ENCODE measurements at regions of chr21 and their contacts with region 1.

Region 1: DNA sequence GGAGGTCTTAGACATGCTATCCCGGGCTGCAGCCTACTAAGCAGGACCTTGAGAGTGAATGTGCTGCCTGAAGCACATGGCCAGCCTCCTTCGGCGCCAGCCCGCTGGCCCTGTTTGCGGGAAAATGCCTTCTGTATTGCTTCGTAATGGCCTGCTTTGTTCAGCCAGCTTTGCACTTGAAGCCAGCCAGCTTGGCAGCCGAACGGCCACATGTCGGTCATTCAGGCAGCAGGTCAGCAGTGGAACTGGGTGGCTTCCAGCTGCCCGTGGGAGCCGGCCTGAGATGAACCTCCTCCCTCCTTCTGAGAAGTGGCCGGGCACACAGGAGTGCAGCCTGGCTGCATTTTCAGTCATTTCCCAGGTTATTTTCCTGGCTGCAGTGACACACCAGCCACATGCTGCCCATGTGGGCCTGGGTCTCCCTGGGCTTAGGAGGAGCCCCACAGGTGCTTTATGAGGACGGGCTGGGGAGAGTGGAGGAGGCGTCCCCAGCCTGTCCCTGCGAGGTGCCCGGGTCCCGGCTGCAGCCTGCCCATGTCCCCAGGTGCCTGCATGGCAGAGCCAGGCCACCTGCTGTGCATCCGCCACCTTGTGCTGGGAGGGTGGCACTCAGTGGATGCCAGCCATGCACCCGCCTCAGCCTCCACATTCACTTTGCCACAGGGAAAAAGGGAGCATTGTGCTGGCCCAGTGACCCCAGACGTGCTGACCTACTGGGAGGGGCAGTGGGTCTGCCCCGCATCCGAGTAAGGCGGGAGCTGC is 103.5 kb downstream of the SIK1 start:
- DNase-seq: peak; percentile 77 to 89
- ATAC-seq: peak; percentile 90 to 92
- H3K4me3 ChIP-seq: no peak overlapping the region
- H3K27ac ChIP-seq: peak overlapping the region in 3 of 4 donors; percentile 47 to 73 (median 65)
- H3K4me1 ChIP-seq: peaks cover 0 to 3% of the 10 kb centered on the region in 2 donors
- H3K27me3 ChIP-seq: peaks cover 0 to 4% (median 1%) of the 10 kb centered on the region in 3 donors
- CTCF ChIP-seq: no peak
- POLR2A ChIP-seq: no peak

Region 2: GRCh38 chr21:43362321-43362791 is 38.9 kb after region 1 on chr21:
- in situ Hi-C with region 1: no loop called
- intact Hi-C with region 1: loop called (anchors 2 kb)
- DNase-seq: peak; percentile 53 to 67
- ATAC-seq: peak; percentile 42 to 52
- H3K4me3 ChIP-seq: peak overlapping the region; percentile 26 to 51 (median 44)
- H3K27ac ChIP-seq: peak overlapping the region; percentile 82 to 92 (median 86)
- H3K4me1 ChIP-seq: peaks cover 11 to 16% of the 10 kb centered on the region in 2 donors
- H3K27me3 ChIP-seq: peaks cover 0 to 5% (median 0%) of the 10 kb centered on the region in 3 donors
- CTCF ChIP-seq: no peak
- POLR2A ChIP-seq: peak in 1 of 2 donors; percentile 9

Measured in gastrocnemius medialis (tissue), 4 donors.